Activated naive CD4-positive, alpha-beta T cell treated with anti-CD3 and anti-CD28 coated beads for 36 hours (primary cell): ENCODE measurements at regions of chr12 and their contacts with region 1.

Region 1: DNA sequence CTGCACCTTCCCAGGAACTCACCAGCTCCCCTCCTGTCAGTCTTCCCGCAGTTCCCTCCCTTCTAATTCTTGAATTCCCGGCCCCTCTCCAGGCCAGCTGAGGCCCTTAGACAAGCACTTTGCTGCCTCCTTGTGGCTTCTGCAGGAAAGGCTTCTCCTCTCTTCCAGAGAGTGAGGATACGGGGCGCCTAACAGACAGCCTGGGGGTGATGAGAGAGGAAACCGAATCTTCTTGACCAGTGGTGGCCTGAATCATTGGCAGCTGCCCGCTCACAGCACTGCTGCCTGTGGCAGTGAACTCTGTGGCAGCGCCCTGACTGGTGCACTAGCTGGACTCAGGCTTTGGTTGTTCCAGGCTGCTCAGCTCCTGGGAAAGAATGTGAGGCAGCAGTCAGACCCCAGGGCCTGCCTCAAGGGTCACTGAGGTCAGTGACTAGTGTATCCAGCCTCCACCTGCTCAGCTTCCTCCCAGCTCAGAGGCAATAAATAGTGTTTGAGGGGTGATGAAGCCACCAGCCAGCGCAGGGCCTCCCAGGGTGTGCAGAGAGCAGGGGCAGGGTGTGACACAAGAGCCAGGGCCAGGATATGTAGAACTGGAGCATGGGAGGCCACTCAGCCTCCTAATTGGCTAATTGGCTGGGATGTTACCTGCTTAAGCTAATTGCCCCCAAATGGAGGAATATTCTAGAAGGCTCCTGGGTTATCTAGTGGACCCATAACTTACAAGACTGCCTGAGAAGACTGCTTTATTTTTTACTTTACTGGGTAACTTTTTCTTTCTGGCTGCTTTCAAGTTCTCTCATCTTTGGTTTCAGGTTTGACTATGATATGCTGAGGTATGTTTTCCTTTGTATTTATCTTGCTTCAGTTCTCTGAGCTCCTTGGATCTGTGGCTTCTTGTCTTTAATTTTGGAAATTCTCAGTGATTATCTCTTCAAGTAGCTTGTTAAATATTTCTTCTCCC is 12.9 kb upstream of the MCRS1 start:
- DNase-seq: peak; percentile 69
- H3K4me3 Mint-ChIP-seq: no peak overlapping the region
- H3K27ac Mint-ChIP-seq: no peak overlapping the region
- H3K4me1 Mint-ChIP-seq: peaks cover 16% of the 10 kb centered on the region
- H3K27me3 Mint-ChIP-seq: no peaks in the 10 kb centered on the region

Region 2: DNA sequence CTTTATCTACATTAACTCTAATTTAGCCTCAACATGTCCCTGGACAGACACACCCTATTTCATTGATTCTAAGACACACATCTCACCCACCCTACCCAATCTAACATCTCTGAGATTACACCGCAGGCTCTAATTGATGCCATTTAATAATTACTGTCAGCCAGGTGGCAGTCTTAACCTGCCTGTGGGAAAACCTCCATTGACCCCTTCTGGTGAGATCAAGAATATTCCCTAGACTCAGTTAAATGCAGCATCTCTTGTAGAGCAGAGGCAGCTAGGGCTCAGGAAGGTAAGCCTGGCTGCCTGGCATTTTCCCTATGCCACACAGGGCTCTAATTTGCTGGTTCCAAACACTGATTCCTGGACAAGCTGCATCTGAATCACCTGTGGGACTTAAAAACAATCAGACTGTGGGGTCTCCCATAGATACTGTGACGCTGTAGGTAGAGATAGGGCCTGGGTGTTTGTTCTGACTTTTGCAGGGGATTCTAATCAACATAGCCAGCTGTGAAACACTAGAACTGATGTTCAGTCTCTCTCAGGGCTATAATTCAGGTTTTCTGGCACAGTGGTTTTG is 27.3 kb before region 1 on chr12:
- CTCF ChIA-PET with region 1: interaction called, 6 read pairs
- intact Hi-C with region 1: loop called (anchors 1 kb)
- DNase-seq: peak; percentile 29
- H3K4me3 Mint-ChIP-seq: no peak overlapping the region
- H3K27ac Mint-ChIP-seq: no peak overlapping the region
- H3K4me1 Mint-ChIP-seq: peaks cover 4% of the 10 kb centered on the region
- H3K27me3 Mint-ChIP-seq: no peaks in the 10 kb centered on the region